Ovary (tissue), 10 donors: ENCODE measurements at regions of chr3 and their contacts with region 1.

Region 1: DNA sequence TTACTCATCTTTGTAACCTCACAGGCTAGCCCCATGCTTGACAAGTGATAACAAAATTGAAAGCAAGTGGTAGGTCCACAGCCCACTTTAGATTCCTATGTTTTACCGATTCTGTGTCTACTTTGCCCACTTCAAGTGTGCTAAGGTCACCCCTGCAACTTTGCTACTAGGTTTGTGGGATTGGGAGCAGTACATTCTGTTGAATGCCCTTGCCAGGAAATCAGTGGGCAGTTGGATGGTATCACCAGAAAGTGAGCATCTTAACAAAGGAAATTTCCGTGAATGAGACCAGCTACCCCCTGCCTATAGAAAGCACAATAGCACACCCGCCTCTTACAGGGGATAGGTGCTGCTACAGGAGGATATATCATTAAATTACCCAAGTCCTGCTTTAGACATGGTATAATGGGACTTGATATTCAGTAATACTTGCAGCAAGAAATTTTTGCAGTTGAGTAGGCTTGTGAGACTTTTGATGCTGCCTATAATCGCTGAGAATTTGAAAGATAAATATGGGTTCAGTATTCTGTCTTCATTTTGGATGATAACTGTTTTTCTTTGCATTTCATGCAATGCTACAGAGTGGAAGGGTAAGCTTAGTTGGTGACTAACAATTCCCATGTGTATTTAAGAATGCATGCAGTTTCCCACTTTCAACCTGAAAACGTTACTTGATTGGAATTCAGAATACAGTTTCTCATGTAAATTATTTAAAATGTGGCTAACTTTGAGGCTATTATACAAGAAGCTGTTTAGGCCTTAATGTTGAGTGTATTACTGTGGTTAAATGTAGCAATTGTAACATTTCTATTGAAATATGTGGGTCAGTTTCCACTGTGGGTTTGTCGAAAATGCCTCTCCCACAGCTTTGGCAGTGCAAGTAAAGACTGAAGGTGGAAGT is 9.5 kb downstream of the EBLN2 start:
- DNase-seq: no peak
- H3K4me3 ChIP-seq: no peak overlapping the region
- H3K27ac ChIP-seq: no peak overlapping the region
- H3K4me1 ChIP-seq: peaks cover 4% of the 10 kb centered on the region
- H3K27me3 ChIP-seq: no peaks in the 10 kb centered on the region
- CTCF ChIP-seq: no peak
- EP300 ChIP-seq: no peak
- POLR2A ChIP-seq: no peak

Region 2: GRCh38 chr3:72797773-72798543 is 273.0 kb before region 1 on chr3:
- intact Hi-C with region 1: no loop called
- DNase-seq: peak in 1 of 5 donors; percentile 37
- H3K4me3 ChIP-seq: no peak overlapping the region
- H3K27ac ChIP-seq: no peak overlapping the region
- H3K4me1 ChIP-seq: no peaks in the 10 kb centered on the region
- H3K27me3 ChIP-seq: no peaks in the 10 kb centered on the region
- CTCF ChIP-seq: no peak
- EP300 ChIP-seq: no peak
- POLR2A ChIP-seq: no peak

Region 3: DNA sequence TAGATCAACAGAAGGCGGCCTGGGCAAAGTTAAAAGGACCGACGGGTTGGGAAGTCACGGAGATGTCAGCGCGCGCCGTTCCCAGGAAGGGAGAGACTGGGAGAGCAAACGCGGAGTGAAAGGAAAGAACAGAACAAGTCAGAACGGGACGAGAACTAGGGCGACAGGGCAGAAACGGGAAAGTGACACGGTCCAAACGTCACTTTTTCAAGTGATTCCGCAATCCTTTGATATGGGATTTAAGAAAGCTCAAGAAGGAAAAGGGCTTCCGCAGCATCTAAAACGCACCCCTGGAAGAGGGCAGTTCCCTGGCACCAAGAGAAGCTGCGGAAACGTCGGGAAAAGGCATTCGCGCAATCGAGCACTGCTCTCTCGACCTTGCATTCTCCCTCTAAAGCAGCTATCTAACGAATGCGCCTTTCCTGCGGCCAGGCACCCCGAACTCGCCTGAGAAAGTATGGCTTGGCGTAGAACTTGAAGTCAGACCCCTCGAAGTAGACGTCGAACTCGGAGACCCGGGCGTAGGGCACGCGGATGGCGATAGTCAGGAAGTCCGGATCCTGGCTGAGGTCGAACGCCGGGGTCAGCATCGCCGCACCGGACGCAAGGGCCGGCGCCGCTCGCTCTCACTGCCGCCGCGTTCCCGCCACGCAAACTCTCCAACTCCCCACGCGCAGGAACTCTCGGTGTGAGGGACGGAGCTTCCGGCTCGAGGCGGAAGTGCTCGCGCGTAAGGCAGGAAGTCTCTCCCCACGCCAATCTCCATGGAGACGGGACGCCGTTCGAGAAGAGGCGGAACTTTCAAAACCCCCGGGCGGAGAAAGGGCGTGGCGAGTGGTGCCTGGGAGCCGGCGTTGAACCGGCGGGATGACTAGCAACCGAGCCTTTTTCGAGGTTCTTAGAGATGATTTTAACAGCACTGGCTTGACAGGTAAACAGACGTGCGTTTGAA is 222.9 kb before region 1 on chr3 and contains the start of gene SHQ1:
- intact Hi-C with region 1: loop called in 1 of 4 experiments (anchors 10 kb)
- DNase-seq: peak; percentile 96 to 97 (median 96)
- H3K4me3 ChIP-seq: peak within 1 kb of the TSS; percentile 82
- H3K27ac ChIP-seq: peak within 1 kb of the TSS in 1 of 2 donors; percentile 40
- H3K4me1 ChIP-seq: peaks cover 6% of the 10 kb centered on the region
- H3K27me3 ChIP-seq: no peaks in the 10 kb centered on the region
- CTCF ChIP-seq: no peak
- EP300 ChIP-seq: no peak
- POLR2A ChIP-seq: peak; percentile 39
- total RNA-seq, gene SHQ1: 9.7 to 30.0 (median 18.2) TPM

Region 4: GRCh38 chr3:72949016-72949415 is 121.9 kb before region 1 on chr3:
- intact Hi-C with region 1: loop called in 1 of 4 experiments (anchors 10 kb)
- DNase-seq: no peak
- H3K4me3 ChIP-seq: no peak overlapping the region
- H3K27ac ChIP-seq: no peak overlapping the region
- H3K4me1 ChIP-seq: peaks cover 6% of the 10 kb centered on the region
- H3K27me3 ChIP-seq: no peaks in the 10 kb centered on the region
- CTCF ChIP-seq: no peak
- EP300 ChIP-seq: no peak
- POLR2A ChIP-seq: no peak